H1 (cell line): ENCODE measurements at regions of chr6 and their contacts with region 1.

Region 1: DNA sequence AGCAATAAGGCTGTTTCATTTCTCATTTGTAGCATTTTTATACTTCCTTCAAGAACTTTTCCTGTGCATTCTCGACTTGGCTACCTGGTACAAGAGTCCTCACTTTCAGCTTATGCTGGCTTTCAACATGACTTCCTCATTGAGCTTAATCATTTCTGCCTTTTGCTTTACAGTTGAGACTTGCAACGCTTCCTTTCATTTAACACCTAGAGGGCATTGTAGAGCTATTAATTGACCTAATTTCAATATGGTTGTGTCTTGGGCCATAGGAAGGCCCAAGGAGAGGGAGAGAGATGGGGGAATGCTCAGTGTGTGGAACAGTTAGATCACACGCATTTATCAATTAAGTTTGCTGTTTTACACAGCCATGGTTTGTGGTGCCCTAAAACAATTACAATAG is 37.2 kb downstream of the SLC22A2 start:
- DNase-seq: no peak
- H3K4me3 ChIP-seq: no peak overlapping the region
- H3K27ac ChIP-seq: no peak overlapping the region
- H3K4me1 ChIP-seq: peaks cover 7 to 18% (median 15%) of the 10 kb centered on the region in 4 experiments; a peak in 4 of 7 replicates
- H3K27me3 ChIP-seq: no peaks in the 10 kb centered on the region
- CTCF ChIP-seq: peak in 2 of 3 experiments; percentile 38 to 54; a peak in 2 of 4 replicates
- EP300 ChIP-seq: no peak
- POLR2A ChIP-seq: no peak
- RAD21 ChIP-seq: peak; percentile 74 to 81

Region 2: GRCh38 chr6:160238751-160239402 is 17.5 kb after region 1 on chr6:
- CTCF ChIA-PET with region 1: interaction called, 10 read pairs
- POLR2A ChIA-PET with region 1: interaction called, 4 read pairs
- DNase-seq: peak in 1 of 2 experiments; percentile 4
- H3K4me3 ChIP-seq: no peak overlapping the region
- H3K27ac ChIP-seq: no peak overlapping the region
- H3K4me1 ChIP-seq: peaks cover 1 to 19% (median 13%) of the 10 kb centered on the region in 4 experiments; a peak in 6 of 7 replicates
- H3K27me3 ChIP-seq: no peaks in the 10 kb centered on the region
- CTCF ChIP-seq: no peak
- EP300 ChIP-seq: no peak
- POLR2A ChIP-seq: no peak
- RAD21 ChIP-seq: no peak

Region 3: DNA sequence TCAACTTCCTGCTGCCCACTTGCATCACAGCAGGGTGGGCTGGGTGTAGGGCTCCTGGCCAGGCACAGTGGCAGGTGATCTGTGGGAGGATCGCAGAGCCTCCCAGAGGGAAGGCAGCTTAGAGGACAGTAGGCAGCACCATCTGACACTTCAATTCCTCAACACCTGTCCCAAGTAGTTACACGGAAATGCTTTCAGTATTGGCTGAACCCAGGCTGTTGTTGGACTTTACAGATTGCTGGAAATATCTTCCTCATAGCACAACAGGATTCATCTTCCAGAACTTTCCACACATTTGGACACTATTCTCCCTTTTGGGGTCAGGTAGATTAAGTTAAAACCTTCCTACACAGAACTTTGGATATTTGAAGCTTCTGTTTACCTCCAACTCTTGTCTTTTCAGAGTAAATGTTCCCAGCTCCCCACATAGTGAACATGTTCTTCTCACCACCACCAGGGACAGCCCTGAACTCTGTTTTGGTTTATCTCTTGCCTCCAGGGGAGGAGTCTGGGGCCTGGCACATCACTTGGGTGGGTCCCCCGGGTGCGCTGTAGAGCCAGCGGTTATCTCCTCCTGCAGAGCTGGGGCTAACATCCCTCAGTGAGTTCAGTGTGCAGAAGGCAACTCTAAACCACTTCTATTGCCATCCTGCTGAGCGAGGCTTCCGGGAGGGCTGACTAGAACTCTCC is 40.7 kb after region 1 on chr6:
- CTCF ChIA-PET with region 1: interaction called, 26 read pairs
- POLR2A ChIA-PET with region 1: no interaction called
- DNase-seq: no peak
- H3K4me3 ChIP-seq: no peak overlapping the region
- H3K27ac ChIP-seq: no peak overlapping the region
- H3K4me1 ChIP-seq: peaks cover 0 to 17% (median 10%) of the 10 kb centered on the region in 4 experiments; a peak in 4 of 7 replicates
- H3K27me3 ChIP-seq: peaks cover 0 to 3% (median 0%) of the 10 kb centered on the region in 4 experiments; a peak in 1 of 7 replicates
- CTCF ChIP-seq: peak; percentile 7 to 51 (median 44)
- EP300 ChIP-seq: no peak
- POLR2A ChIP-seq: no peak
- RAD21 ChIP-seq: peak in 1 of 2 experiments; percentile 46; a peak in 2 of 4 replicates

Region 4: DNA sequence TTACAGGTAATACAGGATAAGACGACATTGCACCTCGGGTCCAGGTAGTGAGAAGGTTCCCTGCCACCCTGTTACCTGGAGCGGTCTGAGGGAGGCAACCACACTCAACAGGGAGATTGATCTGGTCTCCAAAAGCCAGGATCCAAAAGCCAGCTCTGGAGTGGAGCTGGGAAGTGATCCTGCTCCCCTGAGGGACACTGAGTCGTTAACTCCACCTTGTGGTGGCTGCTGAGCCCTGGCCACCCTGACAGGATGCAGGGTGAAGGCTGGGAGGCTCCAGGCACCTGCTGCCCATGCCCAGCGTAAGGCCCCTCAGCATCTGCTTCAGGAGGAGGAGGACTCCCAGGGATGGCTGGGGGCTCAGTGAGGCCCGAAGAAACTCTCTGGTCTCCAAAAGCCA is 75.9 kb after region 1 on chr6:
- CTCF ChIA-PET with region 1: interaction called, 34 read pairs
- POLR2A ChIA-PET with region 1: no interaction called
- DNase-seq: peak in 1 of 2 experiments; percentile 19
- H3K4me3 ChIP-seq: no peak overlapping the region
- H3K27ac ChIP-seq: no peak overlapping the region
- H3K4me1 ChIP-seq: peaks cover 0 to 9% (median 6%) of the 10 kb centered on the region in 4 experiments; a peak in 4 of 7 replicates
- H3K27me3 ChIP-seq: no peaks in the 10 kb centered on the region
- CTCF ChIP-seq: peak; percentile 71 to 82 (median 76)
- EP300 ChIP-seq: no peak
- POLR2A ChIP-seq: no peak
- RAD21 ChIP-seq: peak; percentile 81 to 89

Region 5: DNA sequence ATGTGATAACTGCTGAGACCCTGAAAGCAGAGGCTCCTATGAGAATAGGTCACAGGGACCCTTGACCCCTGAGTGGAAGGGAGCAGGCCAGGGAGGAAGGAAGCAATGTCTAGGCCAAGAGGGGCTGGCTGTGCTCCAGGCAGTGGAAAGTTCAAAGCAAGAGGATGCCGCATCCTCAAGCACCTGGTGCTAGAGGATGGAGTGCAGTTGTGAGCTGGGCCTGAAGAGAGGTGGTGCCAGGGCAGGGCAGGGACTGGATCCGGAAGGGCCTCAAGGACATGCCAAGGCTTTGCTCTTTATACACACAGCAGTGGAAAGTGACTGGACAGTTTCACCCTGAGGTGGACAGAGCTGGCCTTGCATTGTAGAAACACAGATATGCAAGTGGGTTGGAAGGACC is 223.7 kb after region 1 on chr6:
- CTCF ChIA-PET with region 1: no interaction called
- POLR2A ChIA-PET with region 1: no interaction called
- DNase-seq: no peak
- H3K4me3 ChIP-seq: no peak overlapping the region
- H3K27ac ChIP-seq: no peak overlapping the region
- H3K4me1 ChIP-seq: no peaks in the 10 kb centered on the region
- H3K27me3 ChIP-seq: no peaks in the 10 kb centered on the region; a peak in 1 of 7 replicates
- CTCF ChIP-seq: no peak
- EP300 ChIP-seq: no peak
- POLR2A ChIP-seq: no peak
- RAD21 ChIP-seq: no peak